Heart left ventricle (tissue), 16 donors: ENCODE measurements at regions of chr11 and their contacts with region 1.

Region 1: GRCh38 chr11:108967571-108967970 is 302.7 kb downstream of the DDX10 start:
- DNase-seq: peak in 4 of 5 donors; percentile 40 to 80 (median 72)
- ATAC-seq: peak; percentile 92 to 96 (median 95)
- H3K4me3 ChIP-seq: no peak overlapping the region
- H3K27ac ChIP-seq: peak overlapping the region in 11 of 12 donors; percentile 2 to 85 (median 60)
- H3K4me1 ChIP-seq: peaks cover 0 to 12% (median 2%) of the 10 kb centered on the region in 12 donors
- H3K27me3 ChIP-seq: no peaks in the 10 kb centered on the region
- CTCF ChIP-seq: no peak
- POLR2A ChIP-seq: no peak

Region 2: GRCh38 chr11:108727665-108728064 is 239.9 kb before region 1 on chr11:
- intact Hi-C with region 1: no loop called
- DNase-seq: no peak
- ATAC-seq: no peak
- H3K4me3 ChIP-seq: no peak overlapping the region
- H3K27ac ChIP-seq: no peak overlapping the region
- H3K4me1 ChIP-seq: no peaks in the 10 kb centered on the region
- H3K27me3 ChIP-seq: no peaks in the 10 kb centered on the region
- CTCF ChIP-seq: no peak
- POLR2A ChIP-seq: no peak

Region 3: GRCh38 chr11:108857382-108857781 is 110.2 kb before region 1 on chr11:
- intact Hi-C with region 1: loop called in 1 of 10 experiments (anchors 5 kb)
- DNase-seq: peak in 4 of 5 donors; percentile 50 to 63 (median 52)
- ATAC-seq: peak; percentile 85 to 94 (median 92)
- H3K4me3 ChIP-seq: no peak overlapping the region
- H3K27ac ChIP-seq: peak overlapping the region in 8 of 12 donors; percentile 12 to 77 (median 47)
- H3K4me1 ChIP-seq: peaks cover 0 to 41% (median 27%) of the 10 kb centered on the region in 12 donors
- H3K27me3 ChIP-seq: no peaks in the 10 kb centered on the region
- CTCF ChIP-seq: no peak
- POLR2A ChIP-seq: no peak

Region 4: DNA sequence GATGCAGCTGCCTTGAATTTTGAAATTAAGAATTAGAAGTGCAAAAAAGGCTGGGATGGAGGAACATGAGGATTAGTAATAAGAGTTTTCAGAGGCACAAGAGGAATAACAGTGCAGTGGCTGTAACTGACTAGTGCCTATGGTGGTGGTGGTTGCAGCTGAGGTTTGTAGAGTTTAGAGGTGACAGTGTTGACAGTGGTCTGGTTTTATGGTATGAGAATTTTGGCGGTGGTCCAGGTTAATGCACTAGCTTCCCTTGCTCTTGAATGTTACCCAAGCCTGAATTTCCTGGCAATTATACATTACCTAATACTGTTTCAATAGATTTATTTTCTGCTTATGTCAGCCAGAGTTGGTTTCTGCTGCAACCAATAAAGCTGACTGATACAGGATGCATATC is 341.6 kb after region 1 on chr11:
- intact Hi-C with region 1: loop called in 2 of 10 experiments (anchors 5 to 10 kb)
- DNase-seq: no peak
- ATAC-seq: no peak
- H3K4me3 ChIP-seq: no peak overlapping the region
- H3K27ac ChIP-seq: no peak overlapping the region
- H3K4me1 ChIP-seq: no peaks in the 10 kb centered on the region
- H3K27me3 ChIP-seq: no peaks in the 10 kb centered on the region
- CTCF ChIP-seq: no peak
- POLR2A ChIP-seq: no peak